ENCODE measurements at regions of chr10 and their contacts with region 1.

Region 1: DNA sequence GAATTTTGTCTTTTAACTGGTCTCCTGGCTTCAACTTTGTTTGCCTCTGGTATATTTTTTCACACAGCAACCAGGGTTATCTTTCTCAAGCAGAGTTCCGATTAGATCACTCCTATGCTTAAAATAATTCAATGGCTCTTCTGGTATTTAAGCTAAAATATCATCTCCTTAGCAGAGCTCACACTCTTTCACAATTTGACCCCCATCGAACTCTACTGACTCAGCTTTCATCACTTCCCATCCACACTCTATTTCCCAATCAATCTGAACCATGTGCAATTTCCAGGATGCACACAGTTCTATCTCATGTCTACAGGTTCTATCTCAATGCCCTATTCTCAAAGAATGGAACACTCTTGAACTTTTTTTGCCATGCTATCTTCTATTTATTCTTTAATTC is 809.5 kb downstream of the GRID1 start:
- DNase-seq: no peak
- H3K4me3 Mint-ChIP-seq: no peak overlapping the region
- H3K27ac Mint-ChIP-seq: no peak overlapping the region
- H3K4me1 Mint-ChIP-seq: no peaks in the 10 kb centered on the region
- H3K27me3 Mint-ChIP-seq: no peaks in the 10 kb centered on the region
- CTCF ChIP-seq: no peak

Region 2: GRCh38 chr10:85026878-85027467 is 530.1 kb before region 1 on chr10:
- CTCF ChIA-PET with region 1: no interaction called
- intact Hi-C with region 1: no loop called
- DNase-seq: no peak
- H3K4me3 Mint-ChIP-seq: no peak overlapping the region
- H3K27ac Mint-ChIP-seq: no peak overlapping the region
- H3K4me1 Mint-ChIP-seq: no peaks in the 10 kb centered on the region
- H3K27me3 Mint-ChIP-seq: no peaks in the 10 kb centered on the region
- CTCF ChIP-seq: no peak

Region 3: GRCh38 chr10:85280014-85280413 is 277.1 kb before region 1 on chr10:
- CTCF ChIA-PET with region 1: no interaction called
- intact Hi-C with region 1: no loop called
- DNase-seq: no peak
- H3K4me3 Mint-ChIP-seq: no peak overlapping the region
- H3K27ac Mint-ChIP-seq: no peak overlapping the region
- H3K4me1 Mint-ChIP-seq: no peaks in the 10 kb centered on the region
- H3K27me3 Mint-ChIP-seq: no peaks in the 10 kb centered on the region
- CTCF ChIP-seq: no peak

Region 4: DNA sequence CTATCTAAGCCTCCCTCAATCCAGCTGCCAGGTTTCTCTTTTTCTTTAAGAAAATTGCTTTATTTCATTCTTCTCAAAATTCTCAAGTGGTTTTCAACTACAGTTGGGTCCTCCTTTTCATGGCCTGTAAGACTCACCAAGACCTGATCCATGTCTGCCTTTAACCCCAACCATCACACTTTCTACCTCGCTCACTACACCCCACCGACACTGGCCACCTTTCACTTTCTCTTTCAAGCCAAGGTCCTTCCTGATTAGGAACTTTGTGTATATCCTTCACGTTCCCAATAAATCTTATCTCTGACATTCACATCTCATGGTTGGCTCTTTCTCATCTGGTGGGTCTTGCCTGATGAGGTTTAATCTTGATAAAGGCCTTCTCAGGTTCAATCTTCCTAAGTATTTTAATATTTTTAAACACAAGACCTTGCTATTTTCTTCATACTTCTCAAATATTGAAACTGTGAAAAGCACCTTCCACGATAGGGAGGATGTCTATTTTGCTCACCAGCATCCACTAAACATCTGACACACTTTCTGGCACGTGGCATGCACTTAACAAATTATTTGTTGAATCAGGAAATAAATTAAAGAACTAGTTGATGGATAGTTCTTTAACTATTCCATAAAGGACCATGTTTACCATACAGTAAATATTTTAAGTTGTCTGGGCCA is 184.7 kb after region 1 on chr10:
- CTCF ChIA-PET with region 1: no interaction called
- intact Hi-C with region 1: loop called (anchors 10 kb)
- DNase-seq: peak; percentile 12
- H3K4me3 Mint-ChIP-seq: peak overlapping the region; percentile 63
- H3K27ac Mint-ChIP-seq: peak overlapping the region; percentile 15
- H3K4me1 Mint-ChIP-seq: no peaks in the 10 kb centered on the region
- H3K27me3 Mint-ChIP-seq: no peaks in the 10 kb centered on the region
- CTCF ChIP-seq: no peak

Measured in Calu3 (cell line).